Mammary epithelial cell (primary cell): ENCODE measurements at regions of chr7 and their contacts with region 1.

Region 1: GRCh38 chr7:80060218-80060806 is 74.3 kb upstream of the GNAI1 start:
- DNase-seq: peak; percentile 43
- H3K4me3 ChIP-seq: no peak overlapping the region
- H3K27ac ChIP-seq: no peak overlapping the region
- H3K4me1 ChIP-seq: no peaks in the 10 kb centered on the region
- H3K27me3 ChIP-seq: no peaks in the 10 kb centered on the region
- CTCF ChIP-seq: peak; percentile 38 to 51

Region 2: GRCh38 chr7:80175744-80176143 is 115.4 kb after region 1 on chr7:
- CTCF ChIA-PET with region 1: no interaction called
- dilution Hi-C with region 1: no loop called
- in situ Hi-C with region 1: no loop called
- intact Hi-C with region 1: no loop called
- DNase-seq: no peak
- H3K4me3 ChIP-seq: no peak overlapping the region
- H3K27ac ChIP-seq: no peak overlapping the region
- H3K4me1 ChIP-seq: no peaks in the 10 kb centered on the region
- H3K27me3 ChIP-seq: no peaks in the 10 kb centered on the region
- CTCF ChIP-seq: no peak

Region 3: GRCh38 chr7:80453699-80454340 is 393.5 kb after region 1 on chr7:
- CTCF ChIA-PET with region 1: no interaction called
- dilution Hi-C with region 1: no loop called
- in situ Hi-C with region 1: no loop called
- intact Hi-C with region 1: loop called (anchors 2 kb)
- DNase-seq: no peak
- H3K4me3 ChIP-seq: no peak overlapping the region
- H3K27ac ChIP-seq: no peak overlapping the region
- H3K4me1 ChIP-seq: peaks cover 4% of the 10 kb centered on the region
- H3K27me3 ChIP-seq: no peaks in the 10 kb centered on the region
- CTCF ChIP-seq: peak; percentile 38 to 39